ENCODE measurements at regions of chr9 and their contacts with region 1.

Region 1: GRCh38 chr9:93095205-93096130 is 549 bp upstream of the CARD19 start:
- DNase-seq: peak; percentile 96 to 99 (median 98)
- ATAC-seq: peak; percentile 93
- H3K4me3 ChIP-seq: peak overlapping the region; percentile 75
- H3K27ac ChIP-seq: peak overlapping the region; percentile 99
- H3K4me1 ChIP-seq: peaks cover 26 to 52% of the 10 kb centered on the region in 2 experiments
- H3K27me3 ChIP-seq: no peaks in the 10 kb centered on the region
- CTCF ChIP-seq: 0 out of 6 replicates have a peak, but pooled peaks of 1 of the 3 experiments have one; percentile 17
- EP300 ChIP-seq: no peak
- POLR2A ChIP-seq: peak; percentile 89
- RAD21 ChIP-seq: no peak

Region 2: DNA sequence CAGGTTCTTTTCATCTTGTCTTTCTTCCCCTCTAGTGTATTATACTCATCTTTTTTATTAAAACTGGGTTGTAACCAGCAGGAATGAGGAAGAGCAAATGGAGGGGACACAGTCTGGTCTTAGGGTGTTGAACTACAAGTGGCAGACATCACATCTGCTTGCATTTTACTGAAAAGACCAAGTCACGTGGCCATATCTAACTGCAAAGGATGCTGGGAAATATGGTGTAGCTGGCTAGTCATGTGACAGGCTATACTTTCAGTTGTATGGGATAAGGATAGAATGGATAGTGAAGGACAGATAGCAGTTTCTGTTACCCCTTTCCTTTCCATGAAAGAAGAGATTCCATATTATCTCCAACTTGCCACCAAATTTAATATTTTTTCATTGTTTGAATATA is 161.1 kb before region 1 on chr9:
- CTCF ChIA-PET with region 1: no interaction called
- POLR2A ChIA-PET with region 1: no interaction called
- in situ Hi-C with region 1: no loop called
- intact Hi-C with region 1: no loop called
- DNase-seq: peak in 3 of 4 experiments; percentile 13 to 52 (median 40)
- ATAC-seq: no peak
- H3K4me3 ChIP-seq: no peak overlapping the region
- H3K27ac ChIP-seq: no peak overlapping the region
- H3K4me1 ChIP-seq: no peaks in the 10 kb centered on the region
- H3K27me3 ChIP-seq: peaks cover 0 to 8% of the 10 kb centered on the region in 2 experiments; a peak in 1 of 5 replicates
- CTCF ChIP-seq: no peak
- EP300 ChIP-seq: no peak
- POLR2A ChIP-seq: no peak
- RAD21 ChIP-seq: no peak

Region 3: GRCh38 chr9:93064392-93065134 is 30.9 kb before region 1 on chr9:
- CTCF ChIA-PET with region 1: no interaction called
- POLR2A ChIA-PET with region 1: interaction called, 5 read pairs
- in situ Hi-C with region 1: no loop called
- intact Hi-C with region 1: loop called (anchors 5 kb)
- DNase-seq: peak; percentile 36 to 73 (median 56)
- ATAC-seq: peak; percentile 87
- H3K4me3 ChIP-seq: no peak overlapping the region
- H3K27ac ChIP-seq: peak overlapping the region; percentile 59; the same call in 2 of the 3 replicates
- H3K4me1 ChIP-seq: peaks cover 43 to 46% of the 10 kb centered on the region in 2 experiments
- H3K27me3 ChIP-seq: no peaks in the 10 kb centered on the region
- CTCF ChIP-seq: no peak
- EP300 ChIP-seq: peak; percentile 45; the same call in 1 of the 2 replicates
- POLR2A ChIP-seq: no peak
- RAD21 ChIP-seq: peak in 1 of 2 experiments; percentile 9; a peak in 1 of 4 replicates

Region 4: GRCh38 chr9:93082841-93083411 is 12.5 kb before region 1 on chr9:
- CTCF ChIA-PET with region 1: no interaction called
- POLR2A ChIA-PET with region 1: interaction called, 17 read pairs
- in situ Hi-C with region 1: no loop called
- intact Hi-C with region 1: no loop called
- DNase-seq: no peak
- ATAC-seq: no peak
- H3K4me3 ChIP-seq: no peak overlapping the region
- H3K27ac ChIP-seq: no peak overlapping the region
- H3K4me1 ChIP-seq: peaks cover 0 to 13% of the 10 kb centered on the region in 2 experiments; a peak in 2 of 5 replicates
- H3K27me3 ChIP-seq: no peaks in the 10 kb centered on the region
- CTCF ChIP-seq: no peak
- EP300 ChIP-seq: no peak
- POLR2A ChIP-seq: no peak
- RAD21 ChIP-seq: no peak

Region 5: DNA sequence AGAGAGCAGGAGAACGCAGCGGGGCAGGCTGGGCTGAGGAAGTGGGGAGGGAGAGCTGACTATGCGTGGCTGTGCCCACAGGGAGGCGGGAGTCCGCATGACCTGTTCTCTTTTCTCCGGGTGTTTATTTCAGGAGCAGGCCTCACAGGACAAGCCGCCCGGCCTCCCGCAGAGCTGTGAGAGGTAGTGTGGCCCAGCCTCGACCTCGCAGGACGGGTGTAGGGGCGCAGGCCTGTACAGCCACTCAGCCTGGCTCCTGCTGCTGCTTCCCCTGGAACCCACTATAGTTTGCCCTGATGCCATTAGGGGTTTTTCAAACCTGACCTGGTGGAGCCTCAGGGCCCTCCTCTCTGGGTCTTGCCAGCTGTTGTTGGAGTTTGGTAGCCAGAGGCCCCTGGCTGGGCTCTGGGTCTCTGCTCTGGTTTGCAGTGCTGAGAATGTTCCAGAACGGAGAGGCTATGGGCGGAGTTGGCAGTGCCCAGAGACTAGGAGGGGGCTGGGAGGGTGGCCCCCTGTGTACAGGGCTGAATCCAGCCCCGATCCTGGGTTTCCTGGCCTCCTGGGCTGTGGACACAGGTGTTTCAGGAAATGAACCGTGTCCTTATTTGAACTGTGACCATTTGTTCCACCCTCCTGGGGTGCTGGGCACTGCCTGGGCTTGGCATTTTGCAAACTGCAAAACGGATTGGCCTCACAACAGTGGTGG is 167.2 kb after region 1 on chr9:
- CTCF ChIA-PET with region 1: no interaction called
- POLR2A ChIA-PET with region 1: no interaction called
- in situ Hi-C with region 1: no loop called
- intact Hi-C with region 1: no loop called
- DNase-seq: peak in 1 of 4 experiments; percentile 10
- ATAC-seq: no peak
- H3K4me3 ChIP-seq: no peak overlapping the region
- H3K27ac ChIP-seq: no peak overlapping the region
- H3K4me1 ChIP-seq: peaks cover 0 to 9% of the 10 kb centered on the region in 2 experiments; a peak in 2 of 5 replicates
- H3K27me3 ChIP-seq: peaks cover 22 to 86% of the 10 kb centered on the region in 2 experiments
- CTCF ChIP-seq: no peak
- EP300 ChIP-seq: no peak
- POLR2A ChIP-seq: no peak
- RAD21 ChIP-seq: no peak